ENCODE measurements at regions of chr13 and their contacts with region 1.

Region 1: DNA sequence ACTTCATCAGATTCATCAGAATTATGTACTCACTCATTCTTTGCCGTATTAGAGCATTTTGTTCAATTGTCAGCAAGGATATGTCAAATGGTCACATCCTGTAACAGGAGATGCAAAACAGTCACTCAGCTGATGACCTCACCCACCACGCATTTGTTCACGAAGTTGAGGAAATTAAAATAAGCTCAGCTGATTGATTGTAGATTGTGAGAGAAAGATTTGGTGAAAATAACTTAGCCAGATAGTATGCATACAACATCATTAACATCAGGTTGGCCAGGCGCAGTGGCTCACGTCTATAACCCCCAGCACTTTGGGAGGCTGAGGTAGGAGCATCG is 22.6 kb upstream of the CDC16 start:
- DNase-seq: no peak
- ATAC-seq: no peak
- H3K4me3 ChIP-seq: no peak overlapping the region
- H3K4me3 Mint-ChIP-seq: no peak overlapping the region
- H3K27ac ChIP-seq: no peak overlapping the region
- H3K27ac Mint-ChIP-seq: no peak overlapping the region
- H3K4me1 ChIP-seq: no peaks in the 10 kb centered on the region
- H3K4me1 Mint-ChIP-seq: peaks cover 2% of the 10 kb centered on the region
- H3K27me3 ChIP-seq: peaks cover 0 to 25% (median 10%) of the 10 kb centered on the region in 4 experiments
- H3K27me3 Mint-ChIP-seq: peaks cover 38% of the 10 kb centered on the region
- CTCF ChIP-seq: no peak

Region 2: DNA sequence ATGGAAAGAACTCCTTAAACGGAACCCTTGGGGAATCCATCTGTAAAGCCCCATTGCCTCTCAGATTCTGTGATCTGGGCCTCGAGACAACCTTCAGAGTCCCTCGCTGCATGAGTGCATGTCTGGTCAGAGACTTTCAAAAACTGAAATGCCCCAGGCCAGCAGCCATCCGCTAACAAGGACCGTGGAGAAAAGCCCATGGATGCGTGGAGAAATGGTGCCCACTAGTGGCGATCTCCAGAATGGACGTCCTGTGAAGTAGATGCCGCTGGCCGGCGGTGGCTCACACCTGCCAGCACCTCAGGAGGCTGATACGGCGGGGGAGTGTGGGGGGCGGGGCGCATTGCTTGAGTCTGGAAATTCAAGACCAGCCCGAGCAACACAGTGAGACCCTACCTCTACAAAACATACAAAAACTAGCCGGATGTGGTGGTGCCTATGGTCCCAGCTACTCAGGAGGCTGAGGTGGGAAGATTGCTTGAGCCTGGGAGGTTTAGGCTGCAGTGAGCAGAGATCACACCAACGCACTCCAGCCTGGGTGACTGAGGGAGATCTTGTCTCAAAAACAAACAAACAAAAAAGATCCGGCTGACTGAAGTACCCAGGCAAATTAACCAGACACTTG is 14.7 kb after region 1 on chr13:
- CTCF ChIA-PET with region 1: interaction called, 14 read pairs
- POLR2A ChIA-PET with region 1: no interaction called
- intact Hi-C with region 1: no loop called
- DNase-seq: peak; percentile 87
- ATAC-seq: peak; percentile 93
- H3K4me3 ChIP-seq: no peak overlapping the region
- H3K4me3 Mint-ChIP-seq: no peak overlapping the region
- H3K27ac ChIP-seq: no peak overlapping the region
- H3K27ac Mint-ChIP-seq: peak overlapping the region; percentile 41
- H3K4me1 ChIP-seq: peaks cover 16 to 20% of the 10 kb centered on the region in 2 donors
- H3K4me1 Mint-ChIP-seq: peaks cover 20% of the 10 kb centered on the region
- H3K27me3 ChIP-seq: peaks cover 0 to 17% (median 12%) of the 10 kb centered on the region in 4 experiments
- H3K27me3 Mint-ChIP-seq: peaks cover 19% of the 10 kb centered on the region
- CTCF ChIP-seq: peak; percentile 89